HEK293 (cell line): ENCODE measurements at regions of chr9 and their contacts with region 1.

Region 1: GRCh38 chr9:136400038-136400834 is at the start of gene SNAPC4:
- H3K4me3 ChIP-seq: peak within 1 kb of the TSS; percentile 91
- H3K27ac ChIP-seq: peak within 1 kb of the TSS; percentile 53; the same call in 1 of the 2 replicates
- H3K4me1 ChIP-seq: no peaks in the 10 kb centered on the region
- CTCF ChIP-seq: peak; percentile 76

Region 2: GRCh38 chr9:136312436-136312835 is 87.8 kb before region 1 on chr9:
- CTCF ChIA-PET with region 1: interaction called, 15 read pairs
- POLR2A ChIA-PET with region 1: no interaction called
- H3K4me3 ChIP-seq: no peak overlapping the region
- H3K27ac ChIP-seq: no peak overlapping the region
- H3K4me1 ChIP-seq: no peaks in the 10 kb centered on the region
- CTCF ChIP-seq: peak; percentile 62

Region 3: DNA sequence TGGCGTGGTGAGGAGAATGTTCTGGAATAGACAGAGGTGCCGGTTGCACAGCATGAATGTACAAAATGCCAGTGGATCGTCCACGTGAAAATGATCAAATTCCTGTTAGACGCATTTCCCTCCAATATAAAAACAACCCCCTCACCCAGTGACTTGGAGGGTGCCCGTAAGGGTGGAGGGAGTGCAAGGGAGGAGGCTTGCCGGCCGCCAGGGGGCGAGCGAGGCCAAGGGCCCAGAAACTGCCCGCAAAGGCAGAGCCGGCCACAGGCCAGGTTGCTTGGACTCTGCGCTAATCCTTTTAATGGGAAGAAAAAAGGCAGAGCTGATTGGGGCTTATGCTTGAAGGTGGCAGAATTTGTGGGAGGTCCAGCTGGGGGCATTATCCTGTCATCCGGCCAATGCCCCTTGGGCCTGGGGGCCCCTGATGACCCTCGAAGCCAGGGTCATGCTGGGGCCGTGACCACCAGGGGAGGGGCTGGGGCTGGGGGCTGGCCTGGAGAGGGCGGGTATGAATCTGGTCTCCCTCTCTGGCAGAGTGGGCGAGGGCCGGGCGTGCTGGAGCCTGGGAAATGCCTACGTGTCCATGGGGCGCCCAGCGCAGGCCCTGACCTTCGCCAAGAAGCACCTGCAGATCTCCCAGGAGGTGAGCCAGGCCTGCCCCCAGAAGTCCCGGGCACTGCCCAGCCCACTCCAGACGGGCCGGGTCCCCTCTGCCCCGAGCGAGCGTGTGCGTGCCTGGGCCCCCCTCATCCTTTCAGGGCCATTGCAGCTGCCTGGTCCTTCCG is 60.9 kb before region 1 on chr9:
- CTCF ChIA-PET with region 1: interaction called, 13 read pairs
- POLR2A ChIA-PET with region 1: no interaction called
- H3K4me3 ChIP-seq: no peak overlapping the region
- H3K27ac ChIP-seq: no peak overlapping the region
- H3K4me1 ChIP-seq: no peaks in the 10 kb centered on the region
- CTCF ChIP-seq: peak; percentile 76

Region 4: GRCh38 chr9:136410500-136411287 is 10.5 kb after region 1 on chr9 and contains the starts of genes ENTR1 and PMPCA:
- CTCF ChIA-PET with region 1: interaction called, 28 read pairs
- POLR2A ChIA-PET with region 1: interaction called, 7 read pairs
- H3K4me3 ChIP-seq: peak within 1 kb of the TSS; percentile 75
- H3K27ac ChIP-seq: peak within 1 kb of the TSS; percentile 89; the same call in 1 of the 2 replicates
- H3K4me1 ChIP-seq: peaks cover 11% of the 10 kb centered on the region
- CTCF ChIP-seq: no peak

Region 5: DNA sequence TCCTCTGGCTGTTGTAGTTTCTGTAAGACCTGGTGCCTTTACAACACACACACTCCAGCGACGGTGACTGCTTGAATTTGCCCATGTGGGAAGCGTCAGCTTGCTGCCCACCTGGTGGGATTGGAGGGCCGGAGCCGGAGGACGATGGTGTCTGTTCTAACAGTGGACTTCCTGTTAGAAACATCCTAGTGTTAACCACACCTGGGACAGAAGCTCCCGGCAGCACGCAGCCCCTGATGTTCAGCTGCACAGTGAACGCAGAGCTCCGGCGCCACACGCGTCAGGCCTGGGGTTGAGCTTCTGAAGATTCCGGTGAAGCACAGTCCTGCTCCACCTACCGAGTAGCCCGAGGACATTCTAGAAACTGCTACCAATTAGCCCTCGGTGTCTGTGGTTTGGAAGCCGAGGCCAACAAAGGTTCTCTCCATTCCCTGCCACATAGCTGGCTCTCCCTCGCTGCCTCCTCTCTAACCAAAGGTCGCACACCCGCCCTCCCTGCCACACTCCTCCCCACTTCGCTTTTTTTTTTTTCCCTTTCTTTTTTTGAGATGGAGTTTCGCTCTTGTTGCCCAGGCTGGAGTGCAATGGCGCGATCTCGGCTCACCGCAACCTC is 24.6 kb after region 1 on chr9:
- CTCF ChIA-PET with region 1: interaction called, 3 read pairs
- POLR2A ChIA-PET with region 1: interaction called, 15 read pairs
- H3K4me3 ChIP-seq: no peak overlapping the region
- H3K27ac ChIP-seq: no peak overlapping the region
- H3K4me1 ChIP-seq: no peaks in the 10 kb centered on the region
- CTCF ChIP-seq: no peak